ENCODE measurements at regions of chr12 and their contacts with region 1.

Region 1: DNA sequence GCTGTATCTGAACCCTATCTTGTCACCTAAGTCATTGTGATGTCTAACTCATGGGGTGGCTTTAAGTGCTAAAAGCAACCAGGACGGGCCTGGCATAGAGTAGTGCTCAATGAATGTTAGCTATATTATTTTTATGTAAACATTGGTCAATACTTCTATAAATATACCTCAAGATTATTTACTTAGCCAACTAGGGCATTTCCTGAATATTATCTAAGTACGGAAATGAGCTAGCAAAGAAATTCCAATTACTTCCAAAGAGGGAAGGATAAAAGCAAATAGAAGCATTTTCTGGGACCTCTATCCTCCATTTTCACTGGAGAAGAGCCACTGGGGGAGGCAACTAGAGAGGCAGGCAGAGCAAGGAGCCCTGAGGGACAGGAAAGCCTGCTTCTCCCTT is 20.6 kb downstream of the CCDC92 start:
- DNase-seq: peak; percentile 83
- ATAC-seq: peak; percentile 95
- H3K4me3 ChIP-seq: no peak overlapping the region
- H3K27ac ChIP-seq: peak overlapping the region; percentile 52
- H3K4me1 ChIP-seq: peaks cover 19% of the 10 kb centered on the region
- H3K27me3 ChIP-seq: no peaks in the 10 kb centered on the region
- CTCF ChIP-seq: no peak

Region 2: GRCh38 chr12:123972457-123973401 is 20.7 kb after region 1 on chr12 and contains the starts of genes CCDC92 and ZNF664:
- CTCF ChIA-PET with region 1: no interaction called
- POLR2A ChIA-PET with region 1: no interaction called
- intact Hi-C with region 1: loop called (anchors 1 kb)
- DNase-seq: peak; percentile 96
- ATAC-seq: peak; percentile 74
- H3K4me3 ChIP-seq: peak within 1 kb of the TSS; percentile 85
- H3K27ac ChIP-seq: peak within 1 kb of the TSS; percentile 4
- H3K4me1 ChIP-seq: peaks cover 44% of the 10 kb centered on the region
- H3K27me3 ChIP-seq: no peaks in the 10 kb centered on the region
- CTCF ChIP-seq: no peak
- total RNA-seq, gene CCDC92: 9.6 and 9.7 TPM in 2 replicates
- total RNA-seq, gene ZNF664: 80.8 and 86.9 TPM in 2 replicates

Region 3: DNA sequence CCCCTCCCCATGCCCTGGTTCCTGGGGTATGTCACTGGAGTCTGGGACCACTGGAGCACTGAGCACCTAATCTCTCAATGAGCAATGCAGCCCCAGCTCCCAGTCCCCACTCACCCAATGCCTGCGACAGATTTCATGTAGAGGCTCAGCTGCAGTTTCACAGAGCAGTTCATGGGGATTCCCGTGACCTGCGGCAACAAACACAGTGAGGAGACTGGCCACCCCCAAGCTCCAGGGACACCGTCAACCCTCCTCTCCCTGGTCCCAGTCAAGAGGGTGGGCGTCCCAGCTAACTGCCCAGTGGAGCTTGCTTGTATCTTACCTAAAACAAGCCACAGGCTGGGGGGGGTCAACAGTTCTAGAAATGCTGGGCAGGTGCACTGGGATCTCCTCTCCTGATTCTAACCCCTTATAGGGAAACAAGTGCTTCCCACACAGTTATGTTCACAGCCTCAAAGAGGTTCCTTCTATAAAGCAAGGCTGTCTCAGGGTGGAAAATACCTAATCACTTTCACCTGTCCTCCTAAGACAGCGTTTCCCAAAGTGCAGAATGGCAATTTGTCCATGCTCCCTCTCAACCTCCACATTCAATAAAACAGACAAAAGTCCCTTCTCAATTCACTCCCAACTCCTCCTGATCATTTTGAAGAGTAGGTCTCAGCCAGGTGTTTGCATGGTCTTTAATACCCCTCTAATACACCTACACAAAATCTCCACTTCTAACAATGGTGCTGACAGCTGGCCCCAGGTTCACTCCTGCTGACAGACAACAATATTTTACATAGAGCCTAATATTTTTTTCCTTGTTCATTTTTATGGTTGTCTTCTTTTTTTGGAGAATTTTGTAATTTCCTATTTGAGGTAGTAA is 843.3 kb after region 1 on chr12:
- CTCF ChIA-PET with region 1: no interaction called
- POLR2A ChIA-PET with region 1: no interaction called
- intact Hi-C with region 1: no loop called
- DNase-seq: no peak
- ATAC-seq: no peak
- H3K4me3 ChIP-seq: no peak overlapping the region
- H3K27ac ChIP-seq: no peak overlapping the region
- H3K4me1 ChIP-seq: peaks cover 4% of the 10 kb centered on the region; the same call in 1 of the 2 replicates
- H3K27me3 ChIP-seq: no peaks in the 10 kb centered on the region
- CTCF ChIP-seq: no peak